ENCODE measurements at regions of chrX and their contacts with region 1.

Region 1: GRCh38 chrX:131633285-131633917 is 89.5 kb downstream of the OR13H1 start:
- DNase-seq: peak; percentile 29
- ATAC-seq: peak; percentile 86
- H3K4me3 ChIP-seq: no peak overlapping the region
- H3K27ac ChIP-seq: no peak overlapping the region
- H3K4me1 ChIP-seq: no peaks in the 10 kb centered on the region
- H3K27me3 ChIP-seq: no peaks in the 10 kb centered on the region
- CTCF ChIP-seq: peak; percentile 81
- EP300 ChIP-seq: no peak
- POLR2A ChIP-seq: no peak
- RAD21 ChIP-seq: peak; percentile 50; the same call in 1 of the 2 replicates

Region 2: GRCh38 chrX:130975947-130976346 is 657.5 kb before region 1 on chrX:
- CTCF ChIA-PET with region 1: no interaction called
- POLR2A ChIA-PET with region 1: no interaction called
- in situ Hi-C with region 1: no loop called
- intact Hi-C with region 1: loop called (anchors 1 kb)
- DNase-seq: peak; percentile 24
- ATAC-seq: peak; percentile 76
- H3K4me3 ChIP-seq: no peak overlapping the region
- H3K27ac ChIP-seq: no peak overlapping the region
- H3K4me1 ChIP-seq: no peaks in the 10 kb centered on the region
- H3K27me3 ChIP-seq: no peaks in the 10 kb centered on the region
- CTCF ChIP-seq: peak; percentile 57
- EP300 ChIP-seq: no peak
- POLR2A ChIP-seq: no peak
- RAD21 ChIP-seq: peak; percentile 36; the same call in 1 of the 2 replicates

Region 3: DNA sequence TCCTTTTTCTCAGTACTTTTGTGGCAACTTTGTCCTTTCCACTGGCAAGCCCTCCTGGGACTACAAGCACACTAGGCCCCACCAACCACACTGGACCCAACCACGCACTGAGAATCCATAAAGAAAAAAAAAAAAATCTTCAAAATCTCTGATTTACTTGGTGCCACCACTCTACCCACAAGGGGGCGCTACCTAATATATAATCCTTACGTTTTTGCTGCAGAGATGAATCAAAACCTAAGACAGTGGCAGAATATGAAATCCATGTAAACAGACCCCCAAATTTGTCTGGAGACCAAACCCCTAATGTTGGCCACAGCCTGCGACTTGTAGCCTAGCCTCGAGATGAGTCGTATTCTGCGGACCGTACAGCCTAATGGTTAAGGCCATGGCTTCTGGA is 638.7 kb before region 1 on chrX:
- CTCF ChIA-PET with region 1: no interaction called
- POLR2A ChIA-PET with region 1: no interaction called
- in situ Hi-C with region 1: loop called (anchors 10 kb)
- intact Hi-C with region 1: no loop called
- DNase-seq: no peak
- ATAC-seq: no peak
- H3K4me3 ChIP-seq: no peak overlapping the region
- H3K27ac ChIP-seq: no peak overlapping the region
- H3K4me1 ChIP-seq: no peaks in the 10 kb centered on the region
- H3K27me3 ChIP-seq: no peaks in the 10 kb centered on the region
- CTCF ChIP-seq: peak; percentile 41
- EP300 ChIP-seq: no peak
- POLR2A ChIP-seq: no peak
- RAD21 ChIP-seq: no peak

Region 4: DNA sequence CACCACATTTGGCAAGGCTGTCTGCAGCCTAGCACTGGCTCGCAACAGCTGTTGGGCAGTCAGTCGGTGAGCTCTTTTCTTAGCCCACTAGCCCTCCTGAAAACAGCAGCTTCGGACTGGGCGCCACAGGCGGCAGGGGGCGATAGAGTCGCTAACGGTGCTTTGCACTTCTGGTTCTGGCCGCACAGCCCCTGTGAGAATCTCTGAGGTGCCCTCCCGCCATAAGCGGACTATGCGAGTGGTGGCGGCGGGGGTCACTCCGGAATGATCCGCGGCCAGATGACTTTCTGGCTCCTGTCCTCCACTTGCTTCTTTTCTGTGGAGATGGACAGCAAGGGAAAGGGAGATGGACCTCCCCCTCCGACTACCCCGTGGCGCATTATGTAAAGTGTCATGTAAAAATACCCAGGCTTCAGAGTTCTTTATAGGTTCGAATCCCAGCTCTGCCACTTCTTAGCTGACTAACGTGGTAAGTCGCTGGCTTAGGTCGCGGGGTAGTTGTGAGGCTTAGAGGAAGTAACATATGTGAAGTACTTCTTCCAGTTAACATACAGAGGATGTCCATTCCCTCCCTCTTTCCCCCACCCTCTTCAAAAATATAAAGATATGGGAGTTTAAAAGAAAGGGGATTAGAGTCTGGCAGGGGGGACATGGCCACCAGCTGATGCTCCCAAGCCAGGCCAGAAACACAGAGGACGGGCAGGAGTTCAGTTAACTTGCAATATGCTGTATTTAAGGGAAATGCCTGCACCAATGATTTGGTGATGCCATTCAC is 564.3 kb before region 1 on chrX:
- CTCF ChIA-PET with region 1: interaction called, 7 read pairs
- POLR2A ChIA-PET with region 1: no interaction called
- in situ Hi-C with region 1: loop called (anchors 10 kb)
- intact Hi-C with region 1: loop called (anchors 2 kb)
- DNase-seq: peak; percentile 10
- ATAC-seq: peak; percentile 92
- H3K4me3 ChIP-seq: no peak overlapping the region
- H3K27ac ChIP-seq: no peak overlapping the region
- H3K4me1 ChIP-seq: no peaks in the 10 kb centered on the region
- H3K27me3 ChIP-seq: 0 out of 5 replicates have a peak, but pooled peaks cover 0 to 4% of the 10 kb centered on the region in 2 experiments
- CTCF ChIP-seq: peak; percentile 67
- EP300 ChIP-seq: no peak
- POLR2A ChIP-seq: no peak
- RAD21 ChIP-seq: no peak

Region 5: GRCh38 chrX:131262737-131263679 is 370.4 kb before region 1 on chrX:
- CTCF ChIA-PET with region 1: interaction called, 3 read pairs
- POLR2A ChIA-PET with region 1: no interaction called
- in situ Hi-C with region 1: loop called (anchors 10 kb)
- intact Hi-C with region 1: loop called (anchors 1 kb)
- DNase-seq: peak; percentile 35
- ATAC-seq: peak; percentile 94
- H3K4me3 ChIP-seq: peak overlapping the region in 2 of 3 experiments; percentile 10 to 30; a peak in 2 of 6 replicates
- H3K27ac ChIP-seq: peak overlapping the region; percentile 52
- H3K4me1 ChIP-seq: peaks cover 37% of the 10 kb centered on the region
- H3K27me3 ChIP-seq: no peaks in the 10 kb centered on the region; a peak in 1 of 5 replicates
- CTCF ChIP-seq: peak; percentile 83
- EP300 ChIP-seq: no peak
- POLR2A ChIP-seq: no peak
- RAD21 ChIP-seq: peak; percentile 73